CD4-positive, alpha-beta T cell (primary cell): ENCODE measurements at regions of chr11 and their contacts with region 1.

Region 1: DNA sequence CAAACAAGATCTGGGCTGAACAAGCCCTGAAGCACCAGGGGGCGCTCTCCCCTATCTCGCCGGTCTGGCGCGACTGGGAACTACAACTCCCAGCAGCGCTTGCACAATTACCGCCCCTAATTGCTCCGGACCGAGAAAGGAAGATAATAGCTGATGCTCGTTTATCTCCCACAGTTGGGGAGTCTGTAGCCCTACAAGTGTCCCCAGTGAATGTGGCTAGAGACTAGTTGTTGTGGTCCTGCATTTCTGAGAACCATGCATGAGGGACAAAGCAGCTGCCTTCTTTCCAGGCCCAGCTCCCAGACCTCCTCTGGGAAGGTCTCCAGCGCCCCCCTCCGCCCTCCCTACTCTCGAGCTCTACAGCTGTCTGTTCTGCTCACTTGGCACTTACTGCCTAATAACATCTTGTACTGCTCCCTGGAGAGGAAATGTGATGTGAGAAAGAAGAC is 34.4 kb downstream of the NRXN2 start:
- DNase-seq: peak; percentile 83 to 96 (median 89)
- ATAC-seq: peak; percentile 99
- H3K4me3 ChIP-seq: peak overlapping the region; percentile 29
- H3K4me3 Mint-ChIP-seq: peak overlapping the region; percentile 14
- H3K27ac ChIP-seq: no peak overlapping the region
- H3K27ac Mint-ChIP-seq: no peak overlapping the region
- H3K4me1 ChIP-seq: peaks cover 11% of the 10 kb centered on the region
- H3K4me1 Mint-ChIP-seq: peaks cover 25% of the 10 kb centered on the region
- H3K27me3 ChIP-seq: peaks cover 8 to 11% of the 10 kb centered on the region in 2 experiments
- H3K27me3 Mint-ChIP-seq: peaks cover 29% of the 10 kb centered on the region
- CTCF ChIP-seq: peak; percentile 98

Region 2: DNA sequence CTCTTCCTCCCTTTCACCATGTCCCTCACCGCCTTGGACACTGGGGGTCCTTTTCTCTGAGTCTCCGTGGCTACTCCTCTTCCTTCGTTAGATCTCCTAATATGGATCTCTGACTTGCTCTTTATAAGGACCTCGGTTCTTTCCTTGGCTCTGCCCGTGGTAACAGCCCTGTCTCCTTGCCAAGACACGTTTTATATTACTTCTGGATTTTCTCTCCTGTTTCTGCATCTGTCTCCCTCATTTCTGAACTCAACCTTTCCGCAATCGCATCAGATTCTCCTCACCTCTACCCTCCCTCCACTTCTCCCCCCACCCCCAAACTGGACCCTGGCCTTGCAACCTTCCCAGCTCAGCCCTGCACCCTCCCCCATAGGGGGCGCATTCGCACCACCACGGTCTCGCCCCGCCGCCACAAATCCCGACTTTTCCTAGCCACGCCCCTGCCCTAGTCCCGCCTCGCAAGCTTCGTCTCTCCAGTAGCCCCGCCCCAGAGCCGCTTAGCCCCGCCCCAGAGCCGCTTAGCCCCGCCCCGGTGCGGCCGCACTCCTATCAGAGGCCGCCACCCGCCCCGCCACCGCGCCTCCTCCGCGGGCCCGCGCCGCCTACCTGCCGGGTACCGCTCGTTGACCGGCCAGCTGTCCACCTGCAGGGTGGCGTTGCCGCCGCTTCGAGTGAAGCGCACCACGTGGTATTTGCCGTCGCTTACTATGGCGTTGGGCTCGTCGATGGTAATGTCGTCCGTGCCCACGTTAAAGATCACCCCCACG is 58.6 kb before region 1 on chr11:
- CTCF ChIA-PET with region 1: no interaction called
- POLR2A ChIA-PET with region 1: no interaction called
- intact Hi-C with region 1: no loop called
- DNase-seq: no peak
- ATAC-seq: no peak
- H3K4me3 ChIP-seq: no peak overlapping the region
- H3K4me3 Mint-ChIP-seq: no peak overlapping the region
- H3K27ac ChIP-seq: no peak overlapping the region
- H3K27ac Mint-ChIP-seq: no peak overlapping the region
- H3K4me1 ChIP-seq: peaks cover 8% of the 10 kb centered on the region
- H3K4me1 Mint-ChIP-seq: peaks cover 16% of the 10 kb centered on the region
- H3K27me3 ChIP-seq: peaks cover 3 to 4% of the 10 kb centered on the region in 2 experiments
- H3K27me3 Mint-ChIP-seq: peaks cover 14% of the 10 kb centered on the region
- CTCF ChIP-seq: no peak

Region 3: GRCh38 chr11:64703048-64703447 is 14.5 kb after region 1 on chr11:
- CTCF ChIA-PET with region 1: interaction called, 11 read pairs
- POLR2A ChIA-PET with region 1: interaction called, 6 read pairs
- intact Hi-C with region 1: no loop called
- DNase-seq: no peak
- ATAC-seq: no peak
- H3K4me3 ChIP-seq: no peak overlapping the region
- H3K4me3 Mint-ChIP-seq: no peak overlapping the region
- H3K27ac ChIP-seq: no peak overlapping the region
- H3K27ac Mint-ChIP-seq: no peak overlapping the region
- H3K4me1 ChIP-seq: no peaks in the 10 kb centered on the region
- H3K4me1 Mint-ChIP-seq: no peaks in the 10 kb centered on the region
- H3K27me3 ChIP-seq: peaks cover 0 to 7% of the 10 kb centered on the region in 2 experiments
- H3K27me3 Mint-ChIP-seq: peaks cover 30% of the 10 kb centered on the region
- CTCF ChIP-seq: no peak

Region 4: DNA sequence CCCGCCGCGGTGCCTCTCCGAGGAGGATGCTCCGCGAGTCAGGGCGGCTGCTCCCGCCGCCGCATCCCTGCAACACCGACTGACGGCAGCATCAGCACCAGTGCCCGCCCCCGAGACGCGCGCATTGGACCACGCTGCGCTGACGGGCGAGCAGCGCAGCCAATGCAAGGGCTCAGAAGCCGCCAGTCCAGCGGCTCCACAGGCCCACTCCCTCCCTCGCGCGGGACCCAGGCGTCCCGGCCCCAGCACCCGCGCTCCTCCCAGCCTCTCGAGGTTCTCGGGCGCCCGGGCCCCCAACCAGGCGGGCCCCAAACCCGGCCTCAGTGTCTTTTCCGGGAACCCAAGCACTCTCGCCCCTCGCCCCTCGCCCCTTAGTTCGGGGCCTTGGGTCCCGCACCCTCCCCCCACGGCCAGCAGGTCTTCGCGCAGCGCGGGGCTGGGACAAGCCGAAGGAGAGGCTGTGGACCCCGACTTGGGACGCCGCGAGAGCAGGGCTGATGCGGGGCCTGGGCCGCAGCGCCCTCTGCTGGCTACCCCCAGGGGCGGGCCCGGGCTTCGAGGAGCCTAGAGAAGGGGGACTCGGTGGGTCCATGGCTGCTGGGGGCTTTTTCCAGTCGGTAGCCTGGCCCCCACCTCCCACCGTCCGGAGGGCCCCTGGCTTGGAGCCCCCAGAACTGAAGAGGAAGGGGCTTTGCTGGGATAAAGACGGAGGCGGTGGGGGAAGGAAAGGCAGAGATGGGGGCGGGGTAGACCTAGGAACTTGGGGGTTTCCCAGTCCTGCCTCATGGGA is 34.8 kb after region 1 on chr11 and contains the start of gene NRXN2:
- CTCF ChIA-PET with region 1: interaction called, 10 read pairs
- POLR2A ChIA-PET with region 1: no interaction called
- intact Hi-C with region 1: loop called (anchors 1 kb)
- DNase-seq: peak; percentile 74 to 95 (median 82)
- ATAC-seq: peak; percentile 95
- H3K4me3 ChIP-seq: peak within 1 kb of the TSS; percentile 66
- H3K4me3 Mint-ChIP-seq: peak within 1 kb of the TSS; percentile 63
- H3K27ac ChIP-seq: peak within 1 kb of the TSS; percentile 48 to 61
- H3K27ac Mint-ChIP-seq: peak within 1 kb of the TSS; percentile 61
- H3K4me1 ChIP-seq: peaks cover 15% of the 10 kb centered on the region
- H3K4me1 Mint-ChIP-seq: peaks cover 16% of the 10 kb centered on the region
- H3K27me3 ChIP-seq: peaks cover 14 to 21% of the 10 kb centered on the region in 2 experiments
- H3K27me3 Mint-ChIP-seq: peaks cover 36% of the 10 kb centered on the region
- CTCF ChIP-seq: peak; percentile 98
- total RNA-seq, gene NRXN2: 0.05 to 0.31 TPM

Region 5: DNA sequence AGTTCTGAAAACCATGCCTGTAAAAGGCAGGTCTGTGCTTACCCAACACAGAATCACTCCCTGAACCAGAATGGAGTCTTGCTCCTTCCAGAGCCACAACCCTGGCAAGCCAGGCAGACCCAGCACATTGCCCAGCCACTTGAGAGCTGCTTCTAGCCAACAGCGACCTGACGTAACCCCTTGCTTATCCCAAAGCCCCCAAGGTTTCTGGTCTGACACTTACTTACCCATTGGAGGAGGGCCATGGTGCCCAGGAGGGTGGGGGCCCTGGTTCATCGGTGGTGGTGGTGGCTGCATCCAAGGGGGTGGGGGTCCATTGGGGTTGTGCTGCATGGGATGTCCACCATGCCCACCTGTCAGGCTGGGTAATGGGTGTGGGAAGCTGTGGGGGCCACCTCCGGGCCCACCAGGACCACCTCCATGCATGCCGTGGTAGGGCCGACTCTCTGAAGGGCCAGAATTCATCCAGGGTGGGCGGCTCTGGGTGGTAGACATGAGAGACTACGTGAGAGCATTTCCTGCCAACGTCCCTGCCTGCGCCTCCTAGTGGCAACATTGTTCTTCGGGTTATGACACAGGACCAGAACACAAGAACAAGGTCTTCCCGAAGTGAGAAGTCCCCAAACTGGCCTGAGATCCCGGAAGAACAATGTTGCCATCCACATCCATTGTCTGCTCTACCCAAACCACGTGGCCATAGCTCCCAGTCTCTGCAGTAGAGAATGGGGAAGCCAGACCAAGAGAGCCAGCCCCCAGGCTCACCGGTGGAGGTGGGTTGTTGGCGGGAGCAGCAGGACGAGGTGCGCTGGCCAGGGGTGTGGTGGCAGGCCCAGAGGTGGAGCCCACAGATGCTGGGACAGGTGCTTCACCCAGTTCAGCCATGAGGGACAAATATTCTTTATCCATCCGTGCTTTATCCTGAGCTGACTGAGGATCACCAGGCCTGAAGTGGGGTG is 79.1 kb after region 1 on chr11:
- CTCF ChIA-PET with region 1: interaction called, 4 read pairs
- POLR2A ChIA-PET with region 1: interaction called, 3 read pairs
- intact Hi-C with region 1: loop called in 1 of 2 experiments (anchors 2 kb)
- DNase-seq: peak; percentile 65 to 91 (median 82)
- ATAC-seq: peak; percentile 24
- H3K4me3 ChIP-seq: no peak overlapping the region
- H3K4me3 Mint-ChIP-seq: peak overlapping the region; percentile 84
- H3K27ac ChIP-seq: peak overlapping the region; percentile 65 to 72
- H3K27ac Mint-ChIP-seq: peak overlapping the region; percentile 85
- H3K4me1 ChIP-seq: peaks cover 92% of the 10 kb centered on the region
- H3K4me1 Mint-ChIP-seq: peaks cover 87% of the 10 kb centered on the region
- H3K27me3 ChIP-seq: no peaks in the 10 kb centered on the region
- H3K27me3 Mint-ChIP-seq: no peaks in the 10 kb centered on the region
- CTCF ChIP-seq: peak; percentile 74

Region 6: GRCh38 chr11:64810271-64810890 is 121.8 kb after region 1 on chr11 and contains the start of gene MEN1:
- CTCF ChIA-PET with region 1: interaction called, 3 read pairs
- POLR2A ChIA-PET with region 1: interaction called, 5 read pairs
- intact Hi-C with region 1: loop called in 1 of 2 experiments (anchors 5 kb)
- DNase-seq: peak; percentile 45 to 85 (median 69)
- ATAC-seq: peak; percentile 83
- H3K4me3 ChIP-seq: peak within 1 kb of the TSS; percentile 87
- H3K4me3 Mint-ChIP-seq: peak within 1 kb of the TSS; percentile 99
- H3K27ac ChIP-seq: peak within 1 kb of the TSS; percentile 83 to 88
- H3K27ac Mint-ChIP-seq: peak within 1 kb of the TSS; percentile 85
- H3K4me1 ChIP-seq: peaks cover 17% of the 10 kb centered on the region
- H3K4me1 Mint-ChIP-seq: peaks cover 32% of the 10 kb centered on the region
- H3K27me3 ChIP-seq: no peaks in the 10 kb centered on the region
- H3K27me3 Mint-ChIP-seq: no peaks in the 10 kb centered on the region
- CTCF ChIP-seq: no peak
- total RNA-seq, gene MEN1: 16.4 to 17.7 TPM

Region 7: DNA sequence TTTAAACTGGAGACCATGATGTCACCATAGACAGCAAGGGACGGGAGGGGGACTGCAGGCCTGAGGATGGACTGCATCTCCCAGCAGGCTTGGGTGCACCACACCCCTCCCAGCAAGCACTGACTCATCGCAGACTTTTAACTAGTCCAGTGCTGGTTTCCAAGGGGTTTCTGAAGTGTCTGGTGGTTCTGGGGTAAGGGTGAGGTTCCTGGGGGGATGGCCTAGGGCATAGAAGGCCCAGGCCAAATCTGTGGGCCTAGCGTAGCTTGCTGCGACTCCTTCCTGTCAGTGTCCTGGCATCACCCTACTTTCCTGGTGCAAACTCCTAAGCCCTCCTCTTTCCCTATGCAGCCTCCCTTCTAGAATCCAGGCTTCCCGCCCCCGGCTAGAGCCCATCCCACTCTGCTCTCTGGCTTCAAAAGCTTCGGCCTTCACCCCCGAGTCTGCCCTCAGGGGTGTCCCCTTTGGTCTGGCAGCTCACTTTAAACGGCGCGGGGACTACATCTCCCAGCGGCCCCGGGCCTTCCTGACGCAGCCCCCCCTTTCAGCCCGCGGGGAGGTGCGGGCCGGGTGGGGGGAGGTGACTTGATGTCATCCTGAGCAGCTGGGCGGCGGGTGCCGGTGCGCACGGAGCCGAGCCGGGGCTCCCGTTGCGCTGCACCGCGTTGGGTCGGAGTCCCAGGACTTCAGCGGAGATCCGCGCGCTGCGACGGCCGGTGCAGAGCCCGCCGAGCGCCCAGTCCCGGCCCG is 235.7 kb after region 1 on chr11 and contains the start of gene PPP2R5B:
- CTCF ChIA-PET with region 1: no interaction called
- POLR2A ChIA-PET with region 1: no interaction called
- intact Hi-C with region 1: loop called in 1 of 2 experiments (anchors 5 kb)
- DNase-seq: peak; percentile 79 to 95 (median 90)
- ATAC-seq: peak; percentile 92
- H3K4me3 ChIP-seq: peak within 1 kb of the TSS; percentile 69
- H3K4me3 Mint-ChIP-seq: peak within 1 kb of the TSS; percentile 95
- H3K27ac ChIP-seq: peak within 1 kb of the TSS; percentile 73 to 89
- H3K27ac Mint-ChIP-seq: peak within 1 kb of the TSS; percentile 97
- H3K4me1 ChIP-seq: peaks cover 30% of the 10 kb centered on the region
- H3K4me1 Mint-ChIP-seq: peaks cover 13% of the 10 kb centered on the region
- H3K27me3 ChIP-seq: no peaks in the 10 kb centered on the region
- H3K27me3 Mint-ChIP-seq: no peaks in the 10 kb centered on the region
- CTCF ChIP-seq: no peak
- total RNA-seq, gene PPP2R5B: 16.8 to 18.3 TPM

Region 8: GRCh38 chr11:65471410-65471762 is 782.8 kb after region 1 on chr11:
- CTCF ChIA-PET with region 1: no interaction called
- POLR2A ChIA-PET with region 1: no interaction called
- intact Hi-C with region 1: no loop called
- DNase-seq: peak in 5 of 14 experiments; percentile 15 to 64 (median 32)
- ATAC-seq: no peak
- H3K4me3 ChIP-seq: peak overlapping the region; percentile 3
- H3K4me3 Mint-ChIP-seq: no peak overlapping the region
- H3K27ac ChIP-seq: peak overlapping the region; percentile 72 to 76
- H3K27ac Mint-ChIP-seq: peak overlapping the region; percentile 92
- H3K4me1 ChIP-seq: peaks cover 26% of the 10 kb centered on the region
- H3K4me1 Mint-ChIP-seq: peaks cover 16% of the 10 kb centered on the region
- H3K27me3 ChIP-seq: no peaks in the 10 kb centered on the region
- H3K27me3 Mint-ChIP-seq: no peaks in the 10 kb centered on the region
- CTCF ChIP-seq: no peak